ENCODE measurements at regions of chr10 and their contacts with region 1.

Region 1: GRCh38 chr10:26334932-26335573 is 103.1 kb upstream of the APBB1IP start:
- DNase-seq: peak in 28 of 42 donors; percentile 4 to 56 (median 26)

Region 2: GRCh38 chr10:25382029-25382810 is 952.8 kb before region 1 on chr10:
- intact Hi-C with region 1: no loop called
- DNase-seq: peak in 34 of 42 donors; percentile 7 to 82 (median 42)

Region 3: DNA sequence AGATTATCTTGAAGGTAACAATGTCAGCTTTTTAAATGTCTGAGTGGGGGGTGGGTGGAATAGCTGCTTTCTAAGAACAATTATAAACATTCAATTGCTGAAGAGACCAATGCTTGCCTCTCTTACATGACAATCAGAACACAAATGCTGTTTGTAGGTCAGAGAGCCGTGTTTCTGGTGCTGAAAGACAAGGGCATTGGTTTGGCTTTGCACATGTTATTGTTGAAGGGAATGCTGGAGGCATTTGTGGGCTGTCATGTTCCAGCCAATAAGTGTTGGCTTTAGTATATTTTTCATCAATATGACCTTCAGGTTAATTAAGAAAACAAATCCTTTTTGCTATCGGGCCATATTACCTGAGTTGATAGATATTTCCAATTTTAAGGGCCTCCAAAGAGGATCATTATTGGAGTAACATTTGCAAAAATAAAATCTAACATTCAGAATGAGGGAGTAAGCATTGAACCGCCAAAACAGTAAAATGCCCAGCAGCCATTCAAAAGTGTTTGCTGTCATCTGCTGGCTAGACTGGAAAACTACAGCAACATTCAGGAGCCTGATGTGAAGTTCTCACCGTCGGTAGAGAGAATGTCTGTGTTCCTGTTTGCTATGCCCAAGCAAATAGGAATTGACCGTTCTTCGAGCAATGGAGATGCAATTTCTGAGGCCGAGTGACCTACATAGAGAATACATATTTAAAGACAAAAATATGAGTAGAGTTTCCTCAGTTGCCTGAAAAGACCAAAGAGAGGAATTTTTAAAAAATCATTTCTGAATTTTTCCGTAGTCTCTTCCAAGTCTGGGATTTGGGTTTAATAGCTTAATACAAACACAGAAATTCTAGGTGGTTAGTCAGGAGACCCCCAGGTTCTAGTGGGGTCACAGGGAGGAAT is 221.9 kb after region 1 on chr10:
- intact Hi-C with region 1: loop called (anchors 10 kb)
- DNase-seq: peak in 28 of 42 donors; percentile 18 to 73 (median 48)

Measured in head of caudate nucleus (tissue), 42 donors.